Activated CD4-positive, alpha-beta T cell treated with anti-CD3 and anti-CD28 coated beads for 36 hours (primary cell): ENCODE measurements at regions of chr15 and their contacts with region 1.

Region 1: DNA sequence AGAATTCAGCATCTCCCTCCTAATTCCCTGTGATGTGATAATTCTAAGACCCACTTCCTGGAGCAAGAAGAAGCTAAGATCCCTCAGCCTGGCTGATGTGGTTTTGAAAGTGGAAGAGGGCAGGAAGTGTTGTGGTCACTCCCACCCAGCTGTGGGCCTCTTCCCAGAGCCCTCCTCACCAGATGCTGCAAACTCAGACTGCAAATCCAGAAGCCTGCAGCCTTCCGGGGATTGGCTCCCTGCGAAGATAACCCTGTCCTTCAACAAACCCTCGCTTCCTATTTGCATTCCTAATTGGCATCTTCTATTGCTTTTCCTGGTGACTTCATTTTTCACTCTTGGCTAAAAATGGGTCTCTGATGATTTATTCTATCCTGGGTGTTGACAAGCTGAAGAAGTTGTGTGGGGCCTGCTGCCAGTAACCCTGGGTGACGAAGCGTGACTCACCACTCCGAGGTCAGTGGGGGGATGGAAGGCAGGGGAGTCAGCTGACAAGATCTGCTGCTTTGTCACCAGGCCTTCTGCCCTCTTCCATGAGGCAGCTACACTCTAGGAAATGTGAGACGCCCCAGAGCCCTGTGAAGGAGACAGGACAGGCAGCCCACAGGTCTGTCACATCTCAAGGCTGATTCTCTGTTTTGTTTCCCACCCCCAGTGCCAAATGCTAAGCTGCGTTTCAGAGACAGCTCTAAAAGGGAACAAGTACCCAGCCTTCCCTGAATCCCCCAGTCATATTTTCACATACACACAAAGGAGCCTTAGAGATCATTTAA is 99.7 kb upstream of the LIPC start:
- DNase-seq: peak; percentile 96
- ATAC-seq: peak; percentile 93
- H3K4me3 Mint-ChIP-seq: peak overlapping the region; percentile 53
- H3K27ac Mint-ChIP-seq: peak overlapping the region; percentile 96
- H3K4me1 Mint-ChIP-seq: peaks cover 47% of the 10 kb centered on the region
- H3K27me3 Mint-ChIP-seq: peaks cover under 1% of the 10 kb centered on the region

Region 2: GRCh38 chr15:58247855-58248766 is 84.0 kb before region 1 on chr15:
- CTCF ChIA-PET with region 1: no interaction called
- POLR2A ChIA-PET with region 1: no interaction called
- intact Hi-C with region 1: no loop called
- DNase-seq: no peak
- ATAC-seq: no peak
- H3K4me3 Mint-ChIP-seq: no peak overlapping the region
- H3K27ac Mint-ChIP-seq: no peak overlapping the region
- H3K4me1 Mint-ChIP-seq: peaks cover 17% of the 10 kb centered on the region
- H3K27me3 Mint-ChIP-seq: no peaks in the 10 kb centered on the region

Region 3: DNA sequence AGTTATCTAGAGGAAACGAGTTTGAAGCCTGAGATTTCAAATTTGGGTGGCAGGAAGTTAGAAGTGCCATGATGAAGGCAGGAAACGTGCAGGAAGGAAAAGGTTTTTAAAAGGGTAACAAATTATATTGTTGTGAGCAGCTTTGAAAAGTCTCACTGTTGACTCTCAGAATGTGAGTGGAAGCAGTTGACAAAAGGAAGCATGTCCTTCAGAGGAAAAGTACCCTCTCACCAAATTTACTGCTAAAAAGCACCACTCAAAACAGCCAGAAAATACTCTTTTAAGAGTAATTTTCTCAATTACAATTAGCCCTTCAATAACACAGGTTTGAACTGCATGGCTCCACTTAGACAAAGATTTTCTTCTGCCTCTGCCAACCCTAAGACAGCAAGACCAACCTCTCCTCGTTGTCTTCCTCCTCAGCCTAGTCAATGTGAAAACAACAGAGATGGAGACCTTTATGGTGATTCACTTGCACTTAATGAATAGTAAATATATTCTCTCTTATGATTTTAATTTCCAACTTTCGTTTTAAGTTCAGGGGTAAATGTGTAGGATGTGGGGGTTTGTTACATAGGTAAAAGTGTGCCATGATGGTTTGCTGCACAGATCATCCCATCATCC is 17.4 kb before region 1 on chr15:
- CTCF ChIA-PET with region 1: interaction called, 6 read pairs
- POLR2A ChIA-PET with region 1: interaction called, 8 read pairs
- intact Hi-C with region 1: loop called (anchors 1 to 2 kb)
- DNase-seq: no peak
- ATAC-seq: peak; percentile 83
- H3K4me3 Mint-ChIP-seq: no peak overlapping the region
- H3K27ac Mint-ChIP-seq: peak overlapping the region; percentile 96
- H3K4me1 Mint-ChIP-seq: peaks cover 40% of the 10 kb centered on the region
- H3K27me3 Mint-ChIP-seq: no peaks in the 10 kb centered on the region

Region 4: GRCh38 chr15:58357521-58358476 is 25.7 kb after region 1 on chr15:
- CTCF ChIA-PET with region 1: interaction called, 3 read pairs
- POLR2A ChIA-PET with region 1: interaction called, 5 read pairs
- intact Hi-C with region 1: loop called (anchors 1 kb)
- DNase-seq: peak; percentile 69
- ATAC-seq: peak; percentile 86
- H3K4me3 Mint-ChIP-seq: no peak overlapping the region
- H3K27ac Mint-ChIP-seq: peak overlapping the region; percentile 73
- H3K4me1 Mint-ChIP-seq: peaks cover 46% of the 10 kb centered on the region
- H3K27me3 Mint-ChIP-seq: no peaks in the 10 kb centered on the region

Region 5: GRCh38 chr15:58457381-58457965 is 125.4 kb after region 1 on chr15:
- CTCF ChIA-PET with region 1: interaction called, 4 read pairs
- POLR2A ChIA-PET with region 1: no interaction called
- intact Hi-C with region 1: loop called in 1 of 2 experiments (anchors 2 kb)
- DNase-seq: peak; percentile 55
- ATAC-seq: peak; percentile 68
- H3K4me3 Mint-ChIP-seq: no peak overlapping the region
- H3K27ac Mint-ChIP-seq: peak overlapping the region; percentile 24
- H3K4me1 Mint-ChIP-seq: peaks cover 53% of the 10 kb centered on the region
- H3K27me3 Mint-ChIP-seq: no peaks in the 10 kb centered on the region

Region 6: DNA sequence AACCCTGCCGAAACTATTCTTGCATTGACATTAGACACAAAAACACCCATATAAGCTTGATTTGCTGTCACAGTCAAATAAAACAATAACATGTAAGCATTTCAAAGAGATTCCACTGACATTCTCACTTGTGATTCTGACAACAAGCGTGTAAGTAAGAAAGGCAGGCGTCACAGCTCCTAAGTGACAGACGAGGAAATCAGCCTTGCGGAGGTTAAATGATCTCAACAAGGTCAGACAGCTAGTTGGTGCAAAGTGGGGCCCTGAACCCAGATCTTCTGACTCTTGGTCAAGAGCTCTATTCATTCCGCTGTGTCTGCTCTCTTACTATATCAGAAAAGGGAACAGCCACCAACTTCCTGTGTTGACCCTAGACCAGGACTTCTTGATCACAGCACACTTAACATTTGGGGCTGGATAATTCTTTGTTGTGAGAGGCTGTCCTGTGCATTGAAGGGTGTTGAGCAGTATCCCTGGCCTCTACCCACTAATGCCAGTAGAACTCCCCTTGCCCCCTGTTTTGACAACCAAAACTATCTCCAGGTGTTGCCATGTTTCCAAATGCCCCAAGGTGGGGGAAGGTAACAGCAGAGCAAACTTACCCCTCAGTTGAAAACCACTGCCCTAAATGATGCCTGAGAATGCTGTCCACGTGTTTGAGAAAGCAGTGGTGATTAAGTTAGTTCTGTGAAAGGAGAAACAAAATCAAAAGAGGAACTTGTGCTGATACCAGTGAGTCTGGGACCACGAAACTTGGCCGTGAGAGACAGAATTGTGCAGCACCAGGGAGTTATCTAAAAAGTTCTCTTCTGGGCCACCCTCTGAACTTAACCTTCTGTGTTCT is 185.8 kb after region 1 on chr15:
- CTCF ChIA-PET with region 1: no interaction called
- POLR2A ChIA-PET with region 1: no interaction called
- intact Hi-C with region 1: loop called in 1 of 2 experiments (anchors 5 kb)
- DNase-seq: peak; percentile 35
- ATAC-seq: peak; percentile 17
- H3K4me3 Mint-ChIP-seq: no peak overlapping the region
- H3K27ac Mint-ChIP-seq: peak overlapping the region; percentile 40
- H3K4me1 Mint-ChIP-seq: peaks cover 51% of the 10 kb centered on the region
- H3K27me3 Mint-ChIP-seq: peaks cover 3% of the 10 kb centered on the region

Region 7: GRCh38 chr15:58770857-58771620 is 438.9 kb after region 1 on chr15 and contains the start of gene MINDY2:
- CTCF ChIA-PET with region 1: no interaction called
- POLR2A ChIA-PET with region 1: interaction called, 5 read pairs
- intact Hi-C with region 1: loop called in 1 of 2 experiments (anchors 1 kb)
- DNase-seq: peak; percentile 97
- ATAC-seq: peak; percentile 96
- H3K4me3 Mint-ChIP-seq: no peak within 1 kb of the TSS
- H3K27ac Mint-ChIP-seq: peak within 1 kb of the TSS; percentile 88
- H3K4me1 Mint-ChIP-seq: peaks cover 12% of the 10 kb centered on the region
- H3K27me3 Mint-ChIP-seq: no peaks in the 10 kb centered on the region
- total RNA-seq, gene MINDY2: 8.2 to 9.2 TPM